HCT116 (cell line): ENCODE measurements at regions of chr7 and their contacts with region 1.

Region 1: DNA sequence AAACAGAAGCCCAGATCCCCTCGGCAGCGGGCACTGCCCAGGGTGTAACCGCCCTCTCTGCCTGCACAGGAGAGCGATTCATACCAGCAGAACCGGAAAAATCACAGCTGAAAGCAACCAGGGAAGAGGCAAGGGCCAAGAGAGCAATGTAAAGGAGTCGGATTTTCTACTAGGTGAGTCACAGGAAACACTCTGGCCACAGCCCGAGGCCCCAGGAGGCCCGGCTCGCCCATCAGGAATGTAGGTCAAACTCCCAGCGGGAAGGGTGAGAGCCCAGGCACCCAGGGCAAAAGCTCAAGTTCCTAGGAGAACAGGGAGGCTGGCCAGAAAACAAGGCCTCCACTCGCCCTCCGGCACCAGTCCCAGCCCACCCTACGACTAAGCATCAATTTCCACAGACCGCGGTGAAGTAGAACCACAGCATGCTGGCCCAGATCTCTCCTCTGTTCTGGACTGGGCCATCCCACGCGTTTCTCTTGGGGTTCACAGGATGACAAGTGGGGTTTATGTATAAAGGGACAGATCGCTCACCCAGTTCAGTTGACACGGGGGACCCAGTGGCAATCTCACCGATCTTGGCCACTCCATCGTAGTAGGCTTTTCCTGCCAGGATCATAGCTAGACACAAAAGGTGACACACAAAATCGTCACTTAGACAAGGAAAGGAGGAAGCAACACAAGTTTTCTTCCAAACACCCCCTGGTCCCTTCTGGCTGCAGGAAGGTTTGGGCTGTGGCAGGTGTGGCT is 46.2 kb downstream of the BAIAP2L1 start:
- DNase-seq: peak; percentile 91
- ATAC-seq: peak; percentile 90
- H3K4me3 ChIP-seq: peak overlapping the region; percentile 28 to 49
- H3K27ac ChIP-seq: peak overlapping the region; percentile 87
- H3K4me1 ChIP-seq: peaks cover 63 to 84% of the 10 kb centered on the region in 2 experiments
- H3K27me3 ChIP-seq: no peaks in the 10 kb centered on the region
- CTCF ChIP-seq: no peak
- POLR2A ChIP-seq: no peak
- RAD21 ChIP-seq: peak; percentile 42; the same call in 1 of the 2 replicates

Region 2: GRCh38 chr7:98369726-98370125 is 15.0 kb after region 1 on chr7:
- CTCF ChIA-PET with region 1: no interaction called
- POLR2A ChIA-PET with region 1: interaction called, 4 read pairs
- RAD21 ChIA-PET with region 1: no interaction called
- intact Hi-C with region 1: loop called (anchors 2 kb)
- DNase-seq: no peak
- ATAC-seq: peak; percentile 82
- H3K4me3 ChIP-seq: peak overlapping the region; percentile 10 to 43; a peak in 2 of 4 replicates
- H3K27ac ChIP-seq: peak overlapping the region; percentile 61
- H3K4me1 ChIP-seq: peaks cover 64 to 69% of the 10 kb centered on the region in 2 experiments
- H3K27me3 ChIP-seq: no peaks in the 10 kb centered on the region
- CTCF ChIP-seq: no peak
- POLR2A ChIP-seq: no peak
- RAD21 ChIP-seq: 0 out of 2 replicates have a peak, but pooled peaks have one; percentile 10

Region 3: GRCh38 chr7:98400542-98401340 is 46.1 kb after region 1 on chr7 and contains the start of gene BAIAP2L1:
- CTCF ChIA-PET with region 1: interaction called, 9 read pairs
- POLR2A ChIA-PET with region 1: interaction called, 3 read pairs
- RAD21 ChIA-PET with region 1: interaction called, 3 to 6 read pairs
- intact Hi-C with region 1: loop called (anchors 2 kb)
- DNase-seq: peak; percentile 82
- ATAC-seq: peak; percentile 95
- H3K4me3 ChIP-seq: peak within 1 kb of the TSS; percentile 58 to 91
- H3K27ac ChIP-seq: peak within 1 kb of the TSS; percentile 94
- H3K4me1 ChIP-seq: peaks cover 16 to 44% of the 10 kb centered on the region in 2 experiments; a peak in 3 of 4 replicates
- H3K27me3 ChIP-seq: no peaks in the 10 kb centered on the region
- CTCF ChIP-seq: no peak; a peak in 1 of 6 replicates
- POLR2A ChIP-seq: no peak
- RAD21 ChIP-seq: peak; percentile 91
- total RNA-seq, gene BAIAP2L1: 61.2 TPM

Region 4: DNA sequence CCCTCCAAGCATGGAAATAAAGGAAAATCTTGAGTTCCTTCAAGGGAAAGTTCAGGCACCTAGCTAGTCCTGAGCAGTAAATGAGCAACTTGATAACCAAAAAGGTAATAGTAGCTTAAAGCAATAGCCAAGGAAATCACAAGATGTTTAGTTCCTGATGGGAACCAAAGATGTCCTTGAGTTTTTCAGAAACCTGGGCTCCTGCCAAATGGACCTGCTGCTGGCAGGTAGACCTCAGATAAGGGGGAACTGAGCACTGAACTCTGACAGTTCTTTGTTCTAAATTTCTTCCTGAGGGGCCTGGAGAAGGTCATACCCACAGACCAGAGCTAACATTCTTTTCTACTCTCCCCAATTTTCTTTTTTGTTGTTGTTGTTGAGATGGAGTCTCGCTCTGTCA is 466.7 kb after region 1 on chr7:
- CTCF ChIA-PET with region 1: no interaction called
- POLR2A ChIA-PET with region 1: no interaction called
- RAD21 ChIA-PET with region 1: no interaction called
- intact Hi-C with region 1: loop called (anchors 5 kb)
- DNase-seq: no peak
- ATAC-seq: no peak
- H3K4me3 ChIP-seq: no peak overlapping the region
- H3K27ac ChIP-seq: peak overlapping the region; percentile 99
- H3K4me1 ChIP-seq: peaks cover 50 to 63% of the 10 kb centered on the region in 2 experiments
- H3K27me3 ChIP-seq: no peaks in the 10 kb centered on the region
- CTCF ChIP-seq: no peak
- POLR2A ChIP-seq: no peak
- RAD21 ChIP-seq: no peak